Ovary (tissue), 10 donors: ENCODE measurements at regions of chr4 and their contacts with region 1.

Region 1: DNA sequence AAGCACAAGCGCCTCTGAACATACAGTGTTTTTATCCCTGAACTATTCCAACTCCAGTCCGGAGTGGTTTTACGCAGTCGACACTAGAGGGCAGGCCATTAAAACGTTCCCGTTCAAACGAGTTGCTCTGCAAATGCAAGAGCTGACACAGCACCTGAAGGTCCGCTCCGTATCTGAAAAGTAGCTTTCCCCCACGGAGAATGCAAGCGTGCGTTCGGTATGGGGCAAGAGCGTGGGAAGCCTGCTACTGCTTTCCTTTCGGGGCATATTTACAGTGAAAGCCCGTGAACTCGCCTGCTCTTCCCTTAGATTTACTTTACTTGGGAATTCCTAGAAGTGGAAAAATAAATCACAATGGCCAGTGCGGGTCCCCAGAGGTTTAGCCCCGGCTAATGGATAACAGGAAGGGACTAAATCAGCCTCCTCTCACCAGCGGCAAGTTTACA is 190.8 kb downstream of the TSPAN5 start:
- DNase-seq: peak; percentile 75 to 89 (median 81)
- H3K4me3 ChIP-seq: peak overlapping the region; percentile 40
- H3K27ac ChIP-seq: peak overlapping the region in 1 of 2 donors; percentile 43
- H3K4me1 ChIP-seq: peaks cover 3% of the 10 kb centered on the region
- H3K27me3 ChIP-seq: no peaks in the 10 kb centered on the region
- CTCF ChIP-seq: peak; percentile 59 to 88 (median 72)
- EP300 ChIP-seq: no peak
- POLR2A ChIP-seq: peak; percentile 15

Region 2: GRCh38 chr4:98658287-98659105 is 190.8 kb after region 1 on chr4 and contains the start of gene TSPAN5:
- intact Hi-C with region 1: loop called in 2 of 4 experiments (anchors 2 to 5 kb)
- DNase-seq: peak; percentile 75 to 86 (median 83)
- H3K4me3 ChIP-seq: peak within 1 kb of the TSS; percentile 84
- H3K27ac ChIP-seq: peak within 1 kb of the TSS; percentile 85 to 88
- H3K4me1 ChIP-seq: peaks cover 13% of the 10 kb centered on the region
- H3K27me3 ChIP-seq: no peaks in the 10 kb centered on the region
- CTCF ChIP-seq: no peak
- EP300 ChIP-seq: no peak
- POLR2A ChIP-seq: no peak
- total RNA-seq, gene TSPAN5: 34.0 to 69.5 (median 48.2) TPM

Region 3: DNA sequence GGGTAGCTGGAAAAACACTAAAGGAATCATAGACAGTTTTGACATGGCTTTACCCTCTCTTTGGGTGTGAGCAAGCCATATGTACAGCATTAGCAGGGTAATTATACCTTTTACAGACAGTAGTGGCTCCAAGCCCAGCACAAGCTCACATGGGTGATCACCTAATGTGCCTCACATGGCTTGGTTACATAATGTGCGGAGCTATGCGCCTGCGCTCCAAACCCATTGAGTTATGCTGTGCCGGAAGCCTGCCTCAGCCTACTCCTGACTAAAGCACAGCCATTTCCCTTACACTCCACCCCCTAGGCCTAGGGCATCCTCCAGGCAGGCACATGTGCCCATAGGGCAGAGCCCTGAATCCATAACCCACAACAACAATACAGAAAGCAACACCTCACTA is 197.3 kb after region 1 on chr4:
- intact Hi-C with region 1: loop called in 1 of 4 experiments (anchors 5 kb)
- DNase-seq: no peak
- H3K4me3 ChIP-seq: no peak overlapping the region
- H3K27ac ChIP-seq: no peak overlapping the region
- H3K4me1 ChIP-seq: no peaks in the 10 kb centered on the region
- H3K27me3 ChIP-seq: no peaks in the 10 kb centered on the region
- CTCF ChIP-seq: no peak
- EP300 ChIP-seq: no peak
- POLR2A ChIP-seq: no peak

Region 4: GRCh38 chr4:98845960-98846359 is 378.3 kb after region 1 on chr4:
- intact Hi-C with region 1: loop called in 1 of 4 experiments (anchors 10 kb)
- DNase-seq: no peak
- H3K4me3 ChIP-seq: no peak overlapping the region
- H3K27ac ChIP-seq: no peak overlapping the region
- H3K4me1 ChIP-seq: no peaks in the 10 kb centered on the region
- H3K27me3 ChIP-seq: no peaks in the 10 kb centered on the region
- CTCF ChIP-seq: no peak
- EP300 ChIP-seq: no peak
- POLR2A ChIP-seq: no peak

Region 5: DNA sequence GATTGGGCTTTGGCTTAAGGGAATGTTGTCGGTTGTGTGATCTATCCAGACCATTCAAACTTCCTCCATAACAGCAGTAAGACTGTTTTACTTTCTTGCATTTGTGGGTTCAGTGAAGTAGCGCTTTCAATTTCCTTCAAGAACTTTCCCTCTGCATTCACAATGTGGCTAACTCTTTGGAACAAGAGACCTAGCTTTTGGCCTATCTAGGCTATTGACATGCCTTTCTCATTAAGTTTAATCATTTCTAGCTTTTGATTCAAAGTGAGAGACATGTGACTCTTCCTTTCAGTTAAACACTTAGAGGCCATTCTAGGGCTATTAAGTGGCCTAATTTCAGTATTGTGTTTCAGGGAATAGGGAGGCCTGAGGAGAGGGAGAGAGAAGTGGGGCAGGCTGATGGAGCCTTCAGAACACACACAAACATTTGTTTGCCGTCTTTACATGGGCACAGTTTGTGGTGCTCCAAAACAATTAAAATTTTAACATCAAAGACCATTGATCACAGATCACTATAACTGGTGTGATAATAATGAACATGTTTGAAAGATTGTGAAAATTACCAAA is 586.9 kb after region 1 on chr4:
- intact Hi-C with region 1: loop called in 1 of 4 experiments (anchors 10 kb)
- DNase-seq: no peak
- H3K4me3 ChIP-seq: no peak overlapping the region
- H3K27ac ChIP-seq: no peak overlapping the region
- H3K4me1 ChIP-seq: no peaks in the 10 kb centered on the region
- H3K27me3 ChIP-seq: no peaks in the 10 kb centered on the region
- CTCF ChIP-seq: no peak
- EP300 ChIP-seq: no peak
- POLR2A ChIP-seq: no peak